Activated CD4-positive, alpha-beta T cell treated with anti-CD3 and anti-CD28 coated beads for 36 hours (primary cell): ENCODE measurements at regions of chr4 and their contacts with region 1.

Region 1: DNA sequence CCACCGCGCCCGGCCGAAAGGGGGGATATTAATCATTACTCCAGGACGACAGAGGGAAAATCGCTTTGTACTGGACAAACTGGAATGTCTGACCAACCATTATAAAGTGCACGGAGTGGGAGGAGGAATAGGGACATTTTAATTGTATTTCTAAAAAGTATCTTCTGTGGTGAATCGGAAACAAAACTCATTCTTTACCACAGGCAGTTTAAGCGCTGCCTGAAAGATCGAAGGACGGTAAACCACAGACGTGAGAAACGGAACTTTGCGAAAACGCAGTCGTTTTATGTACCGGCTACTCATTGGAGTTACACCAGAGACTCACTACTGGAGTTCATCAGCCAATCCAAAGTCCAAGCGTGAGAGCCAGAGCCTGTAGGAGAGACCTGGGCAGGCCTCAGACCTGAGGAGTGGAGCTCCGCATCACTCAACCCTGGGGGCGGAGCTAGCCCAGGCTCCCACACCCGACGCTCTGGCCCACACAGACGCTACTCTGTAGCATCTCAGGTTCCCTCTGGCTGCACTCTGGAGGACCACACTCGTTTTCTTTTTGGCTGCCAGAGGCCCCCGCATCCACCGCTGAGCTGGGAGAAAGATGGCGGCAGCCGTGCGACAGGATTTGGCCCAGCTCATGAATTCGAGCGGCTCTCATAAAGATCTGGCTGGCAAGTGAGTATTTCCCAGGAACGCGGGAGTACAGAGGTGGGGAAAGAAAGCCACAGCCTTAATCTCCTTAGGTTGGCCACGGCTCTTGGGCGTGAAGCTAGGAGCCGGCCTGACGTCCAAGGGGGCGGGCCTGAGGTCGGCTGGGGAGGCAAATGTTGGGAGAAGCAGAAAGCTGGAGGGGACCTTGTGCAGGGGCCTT is at the start of gene COPS4:
- DNase-seq: peak; percentile 97
- ATAC-seq: peak; percentile 97
- H3K4me3 Mint-ChIP-seq: peak within 1 kb of the TSS; percentile 91
- H3K27ac Mint-ChIP-seq: peak within 1 kb of the TSS; percentile 94
- H3K4me1 Mint-ChIP-seq: peaks cover 22% of the 10 kb centered on the region
- H3K27me3 Mint-ChIP-seq: no peaks in the 10 kb centered on the region
- total RNA-seq, gene COPS4: 35.7 to 35.9 TPM

Region 2: DNA sequence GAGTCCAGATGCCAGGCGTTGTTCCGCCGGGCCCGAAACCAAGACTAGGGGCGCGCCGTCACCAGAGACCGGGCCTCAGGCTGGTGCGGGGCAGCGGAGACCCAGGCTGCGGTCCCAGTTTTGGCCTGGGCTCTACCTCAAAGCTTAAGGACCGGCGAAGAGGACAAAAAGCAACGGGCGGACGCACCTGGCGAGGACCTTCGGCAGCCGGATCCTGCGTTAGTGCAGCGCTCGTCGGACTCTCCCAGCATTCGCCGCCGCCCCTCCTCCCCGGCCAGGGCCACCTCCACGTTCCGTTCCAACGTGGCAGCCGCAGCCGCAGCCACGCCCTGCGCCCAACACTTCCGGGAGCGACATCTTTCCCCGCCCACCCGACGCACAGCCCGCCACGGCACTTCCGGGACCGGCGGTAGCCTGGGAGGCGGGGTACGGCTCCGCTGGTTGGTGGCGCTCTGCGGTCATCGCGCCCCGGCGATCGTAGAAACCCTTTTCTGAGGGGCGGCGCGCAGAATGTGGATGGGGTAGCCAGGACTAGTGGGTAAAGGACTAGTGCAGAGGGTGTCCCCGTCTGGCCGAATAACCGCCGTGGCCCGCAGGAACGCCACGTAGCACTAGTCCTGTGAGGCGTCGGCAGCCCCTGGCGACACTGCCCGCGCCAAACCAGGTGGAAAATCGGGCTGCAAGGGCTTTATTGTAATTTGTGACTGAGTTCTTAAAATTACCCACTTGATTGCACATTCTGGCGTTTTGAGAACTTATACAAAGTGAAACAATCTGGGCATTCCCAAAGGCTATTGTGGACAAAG is 143.8 kb before region 1 on chr4 and contains the start of gene SEC31A:
- CTCF ChIA-PET with region 1: interaction called, 5 read pairs
- POLR2A ChIA-PET with region 1: interaction called, 5 read pairs
- intact Hi-C with region 1: loop called in 1 of 2 experiments (anchors 1 kb)
- DNase-seq: peak; percentile 99
- ATAC-seq: peak; percentile 94
- H3K4me3 Mint-ChIP-seq: peak within 1 kb of the TSS; percentile 81
- H3K27ac Mint-ChIP-seq: peak within 1 kb of the TSS; percentile 89
- H3K4me1 Mint-ChIP-seq: peaks cover 42% of the 10 kb centered on the region
- H3K27me3 Mint-ChIP-seq: no peaks in the 10 kb centered on the region
- total RNA-seq, gene SEC31A: 80.3 to 124 TPM

Region 3: GRCh38 chr4:83074086-83074704 is 39.3 kb after region 1 on chr4:
- CTCF ChIA-PET with region 1: interaction called, 11 read pairs
- POLR2A ChIA-PET with region 1: interaction called, 4 read pairs
- intact Hi-C with region 1: loop called in 1 of 2 experiments (anchors 2 kb)
- DNase-seq: peak; percentile 63
- ATAC-seq: peak; percentile 91
- H3K4me3 Mint-ChIP-seq: peak overlapping the region; percentile 25
- H3K27ac Mint-ChIP-seq: no peak overlapping the region
- H3K4me1 Mint-ChIP-seq: peaks cover 13% of the 10 kb centered on the region
- H3K27me3 Mint-ChIP-seq: no peaks in the 10 kb centered on the region